Psoas muscle (tissue), 8 donors: ENCODE measurements at regions of chr22 and their contacts with region 1.

Region 1: DNA sequence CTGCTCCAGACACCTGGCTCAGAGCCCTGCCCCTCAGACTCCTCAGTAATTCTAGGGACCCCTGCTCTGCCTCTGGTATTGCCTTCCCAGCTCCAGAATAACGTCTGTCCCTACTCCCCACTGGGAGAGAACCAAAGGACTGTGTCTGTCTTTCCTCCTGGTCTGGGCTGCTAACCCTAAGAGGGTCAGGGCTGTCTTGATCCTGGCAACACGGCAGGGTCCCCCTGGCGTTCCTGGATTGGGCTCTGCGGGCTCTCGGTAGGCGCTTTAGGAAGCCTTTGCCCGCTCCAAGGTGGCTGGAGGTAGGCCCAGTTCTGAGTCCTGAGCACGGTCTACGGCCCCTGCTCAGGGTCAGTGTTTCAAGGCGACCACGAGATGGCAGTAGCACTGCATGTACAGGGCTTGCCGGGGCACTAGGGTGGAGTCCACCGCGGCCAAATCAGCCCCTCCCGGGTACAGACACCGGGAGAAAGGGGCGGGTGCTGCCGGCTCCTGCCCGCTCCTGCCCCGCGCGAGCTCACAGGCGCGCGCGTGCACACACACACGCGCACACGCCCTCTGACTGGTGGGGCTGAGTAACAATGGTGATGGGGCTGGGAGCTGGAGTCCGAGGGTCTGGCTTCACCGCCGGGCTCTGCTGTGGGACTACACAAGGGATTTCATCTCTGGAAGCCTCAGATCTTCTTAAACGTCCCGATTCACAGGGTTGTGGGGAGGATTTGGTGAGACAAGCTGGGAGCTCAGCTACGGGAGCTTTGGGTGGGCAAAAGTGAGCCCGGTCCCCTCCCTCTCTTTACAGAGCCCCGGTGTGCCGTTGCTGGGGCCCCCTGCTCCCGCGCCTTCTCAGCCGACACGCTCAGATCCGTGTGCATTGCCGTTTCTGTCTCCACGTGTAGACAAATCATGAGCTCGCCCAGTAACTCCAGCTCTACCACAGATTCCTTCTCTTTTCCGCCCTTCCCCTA is 30.1 kb upstream of the HMOX1 start:
- DNase-seq: peak; percentile 92 to 97
- ATAC-seq: peak; percentile 90 to 93 (median 92)
- H3K4me3 ChIP-seq: peak overlapping the region; percentile 71
- H3K27ac ChIP-seq: peak overlapping the region; percentile 80
- H3K4me1 ChIP-seq: peaks cover 16% of the 10 kb centered on the region
- H3K27me3 ChIP-seq: no peaks in the 10 kb centered on the region
- CTCF ChIP-seq: peak; percentile 92

Region 2: DNA sequence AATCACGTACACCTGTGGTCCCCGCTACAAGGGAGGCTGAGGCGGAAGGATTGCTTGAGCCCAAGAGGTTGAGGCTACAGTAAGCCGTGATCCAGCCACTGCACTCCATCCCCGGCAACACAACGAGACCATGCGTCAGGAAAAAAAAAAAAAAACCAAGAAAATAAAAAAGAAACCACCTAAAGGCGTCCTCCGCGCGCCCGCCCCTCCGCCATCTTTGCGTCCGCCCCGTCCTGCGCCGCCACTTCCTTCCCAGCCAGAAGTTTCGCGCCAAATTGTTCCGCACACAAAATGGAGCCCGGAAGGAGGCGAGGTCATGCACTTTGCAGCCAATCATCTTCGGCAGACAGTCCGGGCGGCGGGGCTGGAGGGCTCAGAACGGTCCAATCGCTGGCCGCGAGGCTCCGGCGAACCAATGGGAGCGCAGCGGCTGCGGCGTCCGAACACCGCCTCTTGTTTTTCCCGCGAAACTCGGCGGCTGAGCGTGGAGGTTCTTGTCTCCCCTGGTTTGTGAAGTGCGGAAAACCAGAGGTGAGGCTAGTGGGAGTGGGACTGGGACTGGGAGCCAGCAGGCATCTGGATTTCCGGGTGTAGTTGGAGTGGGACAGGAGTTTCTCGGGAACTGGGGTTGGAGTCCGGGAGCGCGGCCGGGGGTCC is 49.0 kb after region 1 on chr22 and contains the start of gene MCM5:
- intact Hi-C with region 1: loop called in 1 of 2 experiments (anchors 5 kb)
- DNase-seq: peak; percentile 97 to 99
- ATAC-seq: peak; percentile 96 to 100 (median 100)
- H3K4me3 ChIP-seq: peak within 1 kb of the TSS; percentile 86
- H3K27ac ChIP-seq: peak within 1 kb of the TSS; percentile 62
- H3K4me1 ChIP-seq: peaks cover 9% of the 10 kb centered on the region
- H3K27me3 ChIP-seq: no peaks in the 10 kb centered on the region
- CTCF ChIP-seq: no peak
- total RNA-seq, gene MCM5: 9.1 to 13.6 (median 10.9) TPM

Region 3: DNA sequence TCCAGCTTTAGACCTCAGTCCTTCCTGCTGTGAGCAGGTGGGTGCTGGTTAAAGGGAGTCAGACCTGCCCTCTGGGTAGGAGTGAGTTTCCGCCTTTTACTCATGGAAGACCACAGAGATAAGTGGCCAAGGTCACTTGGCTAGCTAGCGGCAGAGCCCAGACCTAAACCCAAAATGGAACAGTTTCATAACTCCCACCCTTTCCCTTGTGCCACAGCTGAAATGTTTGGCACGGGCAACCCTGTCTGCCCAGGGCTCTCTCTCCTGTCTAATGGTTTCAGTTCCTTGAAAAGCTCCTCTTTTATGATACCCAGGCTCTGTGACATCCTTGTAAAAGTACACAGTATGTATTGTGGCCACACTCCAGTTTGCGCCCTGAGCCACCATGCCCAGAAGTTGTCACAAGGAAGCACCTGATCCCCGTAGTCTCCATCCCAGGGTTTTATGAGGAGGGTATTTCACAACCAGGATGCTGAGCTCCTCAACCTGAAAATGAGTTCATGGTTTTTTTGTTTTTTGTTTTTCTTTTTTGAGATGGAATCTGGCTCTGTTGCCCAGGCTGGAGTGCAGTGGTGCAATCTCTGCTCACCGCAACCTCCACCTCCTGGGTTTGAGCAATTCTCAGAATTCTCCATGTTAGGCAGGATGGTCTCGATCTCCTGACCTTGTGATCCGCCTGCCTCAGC is 261.2 kb after region 1 on chr22:
- intact Hi-C with region 1: loop called in 1 of 2 experiments (anchors 10 kb)
- DNase-seq: peak in 1 of 2 donors; percentile 51
- ATAC-seq: peak in 3 of 4 donors; percentile 6 to 31 (median 14)
- H3K4me3 ChIP-seq: peak overlapping the region; percentile 71
- H3K27ac ChIP-seq: peak overlapping the region; percentile 93
- H3K4me1 ChIP-seq: peaks cover 54% of the 10 kb centered on the region
- H3K27me3 ChIP-seq: no peaks in the 10 kb centered on the region
- CTCF ChIP-seq: no peak